CD8-positive, alpha-beta T cell (primary cell): ENCODE measurements at regions of chr2 and their contacts with region 1.

Region 1: GRCh38 chr2:86118133-86118532 is 12.1 kb downstream of the PTCD3 start:
- DNase-seq: no peak
- ATAC-seq: no peak
- H3K4me3 ChIP-seq: no peak overlapping the region
- H3K4me3 Mint-ChIP-seq: no peak overlapping the region
- H3K27ac ChIP-seq: no peak overlapping the region
- H3K27ac Mint-ChIP-seq: no peak overlapping the region
- H3K4me1 ChIP-seq: no peaks in the 10 kb centered on the region
- H3K4me1 Mint-ChIP-seq: peaks cover 10% of the 10 kb centered on the region
- H3K27me3 ChIP-seq: no peaks in the 10 kb centered on the region
- H3K27me3 Mint-ChIP-seq: no peaks in the 10 kb centered on the region
- CTCF ChIP-seq: no peak

Region 2: GRCh38 chr2:85308896-85309555 is 809.1 kb before region 1 on chr2:
- CTCF ChIA-PET with region 1: no interaction called
- POLR2A ChIA-PET with region 1: no interaction called
- intact Hi-C with region 1: no loop called
- DNase-seq: peak in 1 of 9 experiments; percentile 24
- ATAC-seq: peak; percentile 20
- H3K4me3 ChIP-seq: peak overlapping the region; percentile 24 to 48
- H3K4me3 Mint-ChIP-seq: peak overlapping the region; percentile 89
- H3K27ac ChIP-seq: peak overlapping the region; percentile 38 to 65
- H3K27ac Mint-ChIP-seq: peak overlapping the region; percentile 97
- H3K4me1 ChIP-seq: peaks cover 32% of the 10 kb centered on the region
- H3K4me1 Mint-ChIP-seq: peaks cover 46% of the 10 kb centered on the region
- H3K27me3 ChIP-seq: no peaks in the 10 kb centered on the region
- H3K27me3 Mint-ChIP-seq: no peaks in the 10 kb centered on the region
- CTCF ChIP-seq: no peak

Region 3: DNA sequence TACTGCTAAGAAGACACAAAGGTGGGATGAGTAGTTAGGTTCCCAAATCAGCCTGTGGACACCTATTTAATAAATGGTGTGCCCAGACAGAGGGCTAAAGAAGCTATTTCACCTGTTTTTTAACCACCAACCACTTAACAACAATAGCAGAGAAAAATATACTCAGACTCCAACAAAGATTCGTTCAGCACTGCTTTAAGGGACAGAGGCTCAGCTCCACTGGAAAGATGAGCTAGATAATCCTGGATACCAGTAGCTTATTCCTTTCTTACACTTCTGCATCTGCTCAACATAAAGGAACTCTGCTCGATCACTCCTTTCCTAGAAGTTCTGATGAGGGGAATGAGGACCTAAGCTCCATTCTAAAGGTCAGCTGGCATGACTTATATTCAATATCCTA is 32.4 kb after region 1 on chr2:
- CTCF ChIA-PET with region 1: no interaction called
- POLR2A ChIA-PET with region 1: no interaction called
- intact Hi-C with region 1: loop called in 1 of 2 experiments (anchors 5 kb)
- DNase-seq: no peak
- ATAC-seq: no peak
- H3K4me3 ChIP-seq: no peak overlapping the region
- H3K4me3 Mint-ChIP-seq: no peak overlapping the region
- H3K27ac ChIP-seq: no peak overlapping the region
- H3K27ac Mint-ChIP-seq: no peak overlapping the region
- H3K4me1 ChIP-seq: no peaks in the 10 kb centered on the region
- H3K4me1 Mint-ChIP-seq: peaks cover 2% of the 10 kb centered on the region
- H3K27me3 ChIP-seq: no peaks in the 10 kb centered on the region
- H3K27me3 Mint-ChIP-seq: no peaks in the 10 kb centered on the region
- CTCF ChIP-seq: no peak